Cardiac septum (tissue), 1 donor: ENCODE measurements at regions of chr7 and their contacts with region 1.

Region 1: DNA sequence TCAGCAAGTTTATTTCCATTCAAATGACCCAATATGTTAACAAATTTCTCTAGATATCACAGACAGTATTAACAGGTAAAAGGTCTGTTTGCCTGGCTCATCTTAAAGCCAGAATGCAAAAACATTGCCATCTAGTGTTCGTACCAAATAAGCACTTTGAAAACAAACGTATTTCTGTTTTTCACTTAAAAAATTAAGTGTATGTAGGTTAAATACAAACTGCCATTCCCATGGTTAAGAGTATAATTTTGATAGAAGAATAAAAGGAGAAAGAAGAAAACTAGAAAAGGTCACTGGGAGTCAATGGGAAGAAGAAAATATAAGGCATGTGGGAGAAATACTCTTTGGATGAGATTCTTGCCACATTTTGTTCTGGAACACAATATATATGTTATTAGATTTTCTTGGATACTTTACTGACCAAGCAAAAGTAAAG is 51.0 kb downstream of the ORC5 start:
- DNase-seq: no peak

Region 2: DNA sequence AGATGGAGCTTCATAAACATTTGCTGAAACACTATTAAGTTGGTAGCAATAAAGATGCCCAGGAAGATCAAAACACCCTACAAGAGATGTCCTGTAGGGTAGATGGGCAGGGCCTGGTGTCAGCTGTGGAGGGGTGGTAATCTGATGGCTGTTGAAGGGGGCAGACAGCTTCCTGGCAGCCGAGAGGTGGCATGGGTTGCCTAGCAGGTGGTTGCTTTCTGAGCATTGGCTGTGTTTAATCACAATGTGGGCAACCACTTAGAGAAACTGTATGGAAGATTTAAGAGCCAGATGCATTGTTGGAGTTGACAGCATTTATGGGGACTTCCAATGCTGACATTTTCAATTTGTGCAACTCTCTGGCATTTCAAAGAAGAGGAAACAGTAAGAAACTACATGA is 630.9 kb before region 1 on chr7:
- intact Hi-C with region 1: loop called (anchors 5 kb)
- DNase-seq: no peak

Region 3: DNA sequence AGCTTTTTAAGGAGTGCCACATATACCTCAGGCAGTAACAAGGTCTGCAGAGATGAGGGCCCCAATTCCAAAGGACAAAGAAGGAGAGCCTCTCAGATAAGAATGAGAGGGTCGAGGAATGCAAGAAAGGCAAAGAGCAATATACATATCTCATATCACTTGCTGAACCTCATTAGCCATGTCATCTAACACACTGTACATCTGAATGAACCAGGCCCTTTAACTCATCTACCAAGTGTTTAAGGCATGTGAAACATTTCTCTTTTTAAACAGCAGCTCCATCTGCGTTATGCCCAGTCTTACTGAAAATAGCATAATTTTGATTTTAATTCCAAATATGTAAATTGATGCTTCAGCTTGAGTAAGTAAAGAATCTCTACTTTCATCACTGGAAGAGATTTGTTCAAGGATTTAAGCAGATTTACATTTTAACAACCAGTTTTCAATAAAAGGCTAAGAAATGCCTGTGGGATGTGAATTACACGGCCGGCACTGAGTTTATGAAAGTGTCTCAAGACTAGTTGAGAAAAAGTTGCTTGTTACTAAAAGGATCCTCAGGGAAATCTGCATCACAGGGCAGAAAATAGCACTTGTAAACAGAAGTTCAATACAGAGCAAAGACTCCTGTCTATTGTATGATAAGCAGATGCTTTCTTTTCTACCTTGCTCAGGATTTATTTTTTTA is 587.1 kb before region 1 on chr7:
- intact Hi-C with region 1: loop called (anchors 2 kb)
- DNase-seq: no peak

Region 4: DNA sequence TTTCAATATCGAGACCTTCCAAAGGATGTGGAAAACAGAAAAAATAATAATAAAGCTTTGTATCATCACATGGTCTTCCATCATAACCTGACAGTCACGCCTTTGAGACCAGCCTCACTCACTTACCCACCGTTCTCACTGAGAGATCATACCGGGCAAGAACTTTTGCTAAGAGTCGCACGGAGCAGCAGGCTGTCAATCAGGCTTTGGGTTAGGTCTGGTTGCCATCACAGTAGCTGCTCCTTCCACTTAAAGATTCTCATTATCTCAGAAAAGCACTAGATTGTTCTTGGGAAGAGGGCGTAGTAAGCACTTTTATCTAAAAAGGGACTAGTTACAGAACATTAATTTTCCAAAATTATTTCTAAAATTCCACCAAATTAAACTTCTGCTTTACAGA is 169.4 kb before region 1 on chr7:
- intact Hi-C with region 1: no loop called
- DNase-seq: no peak

Region 5: DNA sequence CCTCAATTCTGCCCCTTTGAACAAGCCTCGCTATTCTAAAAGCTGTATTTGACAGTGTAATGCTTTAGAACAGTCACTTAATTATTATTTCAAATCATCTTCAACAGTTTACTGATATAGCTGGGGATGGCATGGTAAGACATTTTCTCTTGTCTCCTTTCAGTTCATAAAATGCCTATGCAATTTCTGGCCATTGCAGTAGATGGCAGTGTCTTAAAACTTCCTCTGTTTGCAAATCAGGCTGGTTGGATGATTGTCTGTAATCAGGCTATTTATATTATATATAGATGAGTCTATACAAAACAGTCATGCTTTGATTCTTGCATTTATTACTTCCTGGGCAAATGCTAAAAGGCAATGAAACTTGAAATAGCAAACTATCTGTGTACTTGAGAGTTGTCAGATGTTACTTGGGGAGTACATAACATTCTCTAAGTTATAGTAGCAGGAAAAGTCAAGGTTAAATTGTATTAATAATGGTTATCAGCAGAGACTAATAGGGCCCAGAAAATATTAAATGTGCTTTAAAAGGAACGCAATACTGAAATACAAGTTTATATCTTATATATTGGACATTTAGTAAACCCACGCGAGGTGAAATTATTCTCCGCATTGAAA is 116.0 kb after region 1 on chr7:
- intact Hi-C with region 1: no loop called
- DNase-seq: no peak